Common myeloid progenitor, CD34-positive (primary cell): ENCODE measurements at regions of chr9 and their contacts with region 1.

Region 1: DNA sequence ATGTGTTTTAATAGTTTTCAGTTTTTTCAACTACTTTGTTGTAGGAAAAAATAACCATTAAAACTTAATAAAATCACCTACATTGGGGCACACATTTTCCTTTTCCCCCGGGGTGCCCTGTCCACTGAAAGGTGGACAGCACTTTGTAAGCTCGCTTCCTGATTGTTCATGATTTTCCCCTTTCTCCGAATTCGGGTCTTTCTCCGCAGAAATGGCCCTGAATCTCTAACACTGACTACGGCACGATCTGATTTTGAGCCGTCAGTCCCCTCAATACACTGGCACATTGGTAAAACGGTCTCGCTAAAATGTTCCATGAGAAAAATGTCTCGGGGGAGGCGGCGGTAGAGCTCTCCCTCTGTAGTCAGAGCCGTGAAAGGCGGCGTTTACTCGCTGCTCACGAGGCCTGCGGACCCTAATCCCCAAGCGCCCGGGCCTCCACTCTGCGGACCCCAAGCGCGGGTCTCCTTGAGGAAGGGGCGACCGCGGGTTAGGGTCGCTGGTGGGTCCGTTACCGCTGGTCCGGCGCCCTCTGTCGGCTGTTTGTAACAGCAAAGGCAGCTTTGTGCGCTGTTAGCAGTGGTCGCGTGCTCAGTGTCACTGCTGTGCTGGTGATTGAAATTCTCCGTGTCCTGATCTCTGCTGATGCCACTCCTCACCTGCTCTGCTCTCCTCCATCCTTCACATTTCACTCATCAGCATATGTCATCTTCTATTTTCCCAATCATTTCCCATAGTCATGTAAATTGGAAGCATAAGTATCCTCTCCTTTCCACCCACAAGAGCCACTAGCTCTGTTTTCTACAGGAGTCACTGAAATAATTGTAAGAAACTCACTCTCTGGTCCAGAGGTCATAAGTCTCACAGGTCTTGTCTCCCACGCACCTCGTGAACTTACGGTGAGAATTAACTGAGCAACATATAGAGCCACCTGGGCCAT is 10.8 kb upstream of the IFNA2 start:
- DNase-seq: peak; percentile 43 to 70 (median 65)
- H3K4me3 ChIP-seq: peak overlapping the region; percentile 20 to 76 (median 68)
- H3K27ac ChIP-seq: no peak overlapping the region
- H3K4me1 ChIP-seq: peaks cover 0 to 8% (median 6%) of the 10 kb centered on the region in 4 experiments
- H3K27me3 ChIP-seq: peaks cover 0 to 32% (median 8%) of the 10 kb centered on the region in 5 experiments

Region 2: GRCh38 chr9:21070171-21070571 is 325.9 kb before region 1 on chr9:
- CTCF ChIA-PET with region 1: no interaction called
- POLR2A ChIA-PET with region 1: no interaction called
- DNase-seq: peak; percentile 38 to 84 (median 74)
- H3K4me3 ChIP-seq: peak overlapping the region in 3 of 7 experiments; percentile 16 to 55 (median 55)
- H3K27ac ChIP-seq: peak overlapping the region in 1 of 2 experiments; percentile 18
- H3K4me1 ChIP-seq: peaks cover 2 to 13% (median 7%) of the 10 kb centered on the region in 4 experiments
- H3K27me3 ChIP-seq: no peaks in the 10 kb centered on the region

Region 3: GRCh38 chr9:21326526-21327139 is 69.4 kb before region 1 on chr9:
- CTCF ChIA-PET with region 1: interaction called, 52 read pairs
- POLR2A ChIA-PET with region 1: no interaction called
- DNase-seq: peak; percentile 55 to 76 (median 73)
- H3K4me3 ChIP-seq: no peak overlapping the region
- H3K27ac ChIP-seq: no peak overlapping the region
- H3K4me1 ChIP-seq: peaks cover 0 to 20% (median 13%) of the 10 kb centered on the region in 4 experiments
- H3K27me3 ChIP-seq: no peaks in the 10 kb centered on the region

Region 4: DNA sequence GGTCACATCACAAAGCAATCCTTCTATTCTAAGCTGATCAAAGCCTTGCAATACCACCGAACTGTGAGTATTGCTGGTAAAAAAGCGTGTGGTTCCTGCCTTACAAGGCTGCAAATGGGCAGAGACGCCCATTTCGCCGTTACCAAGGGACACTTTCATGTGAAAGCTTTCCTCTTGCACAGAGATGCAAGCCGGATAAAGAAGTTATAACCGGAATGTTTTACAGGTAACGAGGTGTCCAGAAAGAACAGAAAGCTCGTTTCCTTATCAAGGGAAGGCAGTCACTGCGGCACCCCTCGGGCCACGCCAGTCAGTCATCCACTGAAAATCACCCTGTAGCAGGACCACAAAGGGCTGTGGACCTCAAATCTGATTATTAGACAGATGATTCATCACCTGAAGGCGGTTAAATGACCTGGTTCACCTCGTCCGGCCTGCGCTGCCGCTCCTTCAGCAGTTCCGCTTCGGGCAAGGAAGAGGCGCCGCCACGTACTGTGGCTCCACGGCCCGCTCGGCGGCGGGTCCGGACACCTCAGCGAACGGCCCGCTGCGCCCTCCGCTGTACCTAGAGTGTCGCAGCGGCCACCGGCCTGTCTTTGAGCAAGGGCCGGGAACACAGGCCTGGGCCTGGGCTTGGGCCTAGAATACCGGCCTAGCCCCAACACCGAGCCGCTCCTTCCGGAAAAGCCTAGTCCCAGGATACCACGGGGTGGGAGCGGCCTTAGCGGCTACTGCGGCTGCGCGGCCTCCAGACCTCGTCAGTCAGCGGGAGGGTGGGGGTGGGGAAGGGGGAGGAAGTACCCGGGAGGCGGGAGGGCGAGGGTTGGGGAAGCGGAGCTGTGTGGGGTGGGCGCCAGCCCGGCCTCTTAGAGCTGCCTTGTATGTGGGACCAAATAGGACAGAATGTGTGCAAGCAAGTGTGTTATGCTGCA is 61.1 kb before region 1 on chr9 and contains the start of gene KLHL9:
- CTCF ChIA-PET with region 1: interaction called, 46 read pairs
- POLR2A ChIA-PET with region 1: no interaction called
- DNase-seq: peak; percentile 92 to 95 (median 93)
- H3K4me3 ChIP-seq: peak within 1 kb of the TSS; percentile 72 to 95 (median 89)
- H3K27ac ChIP-seq: peak within 1 kb of the TSS; percentile 97 to 99
- H3K4me1 ChIP-seq: peaks cover 9 to 48% (median 21%) of the 10 kb centered on the region in 4 experiments
- H3K27me3 ChIP-seq: no peaks in the 10 kb centered on the region

Region 5: GRCh38 chr9:21340735-21341134 is 55.3 kb before region 1 on chr9:
- CTCF ChIA-PET with region 1: interaction called, 11 read pairs
- POLR2A ChIA-PET with region 1: no interaction called
- DNase-seq: no peak
- H3K4me3 ChIP-seq: no peak overlapping the region
- H3K27ac ChIP-seq: no peak overlapping the region
- H3K4me1 ChIP-seq: peaks cover 3 to 18% (median 4%) of the 10 kb centered on the region in 4 experiments
- H3K27me3 ChIP-seq: no peaks in the 10 kb centered on the region

Region 6: GRCh38 chr9:21381448-21382339 is 14.4 kb before region 1 on chr9:
- CTCF ChIA-PET with region 1: interaction called, 13 read pairs
- POLR2A ChIA-PET with region 1: no interaction called
- DNase-seq: peak; percentile 60 to 93 (median 90)
- H3K4me3 ChIP-seq: peak overlapping the region in 6 of 7 experiments; percentile 5 to 73 (median 47)
- H3K27ac ChIP-seq: no peak overlapping the region
- H3K4me1 ChIP-seq: peaks cover 15 to 34% (median 23%) of the 10 kb centered on the region in 4 experiments
- H3K27me3 ChIP-seq: no peaks in the 10 kb centered on the region

Region 7: DNA sequence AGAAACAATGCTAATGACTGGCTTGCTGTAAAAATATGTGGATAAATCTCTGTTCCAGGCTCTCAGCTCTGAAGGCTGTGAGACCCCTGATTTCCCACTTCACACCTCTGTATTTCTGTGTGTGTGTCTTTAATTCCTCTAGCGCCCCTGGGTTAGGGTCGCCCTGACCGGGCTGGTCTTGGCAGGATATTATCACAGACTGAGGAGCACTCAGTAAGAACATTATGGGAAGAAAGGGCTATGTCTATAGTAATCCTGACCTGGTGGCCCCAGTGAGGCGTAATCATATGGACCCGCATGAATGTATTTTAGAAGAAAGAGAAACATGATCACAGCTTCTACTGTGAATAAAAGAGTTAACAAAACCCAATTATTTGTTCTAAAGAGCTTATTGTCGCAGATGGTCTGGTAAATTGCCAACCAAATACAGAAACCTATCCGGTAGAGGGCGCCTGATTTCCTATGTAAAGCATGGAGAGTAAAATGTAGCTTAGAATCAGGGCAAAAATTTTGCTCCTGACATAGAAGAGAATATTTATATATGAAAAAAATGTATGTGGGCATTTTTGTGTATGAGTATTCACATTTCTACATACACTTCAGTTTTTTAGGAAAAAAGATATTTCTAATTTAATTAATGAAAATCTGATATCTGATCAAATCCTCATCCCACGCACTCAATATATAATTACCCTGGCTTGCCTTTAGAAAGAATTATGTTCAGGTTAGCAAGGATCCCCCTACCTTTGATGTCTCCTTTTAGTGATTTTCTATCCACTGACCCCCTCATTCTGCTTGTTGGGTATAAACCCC is 38.4 kb after region 1 on chr9:
- CTCF ChIA-PET with region 1: interaction called, 10 read pairs
- POLR2A ChIA-PET with region 1: no interaction called
- DNase-seq: peak; percentile 73 to 87 (median 84)
- H3K4me3 ChIP-seq: no peak overlapping the region
- H3K27ac ChIP-seq: no peak overlapping the region
- H3K4me1 ChIP-seq: peaks cover 0 to 7% (median 4%) of the 10 kb centered on the region in 4 experiments
- H3K27me3 ChIP-seq: no peaks in the 10 kb centered on the region

Region 8: GRCh38 chr9:21465859-21466518 is 69.9 kb after region 1 on chr9:
- CTCF ChIA-PET with region 1: interaction called, 10 read pairs
- POLR2A ChIA-PET with region 1: no interaction called
- DNase-seq: peak; percentile 57 to 76 (median 72)
- H3K4me3 ChIP-seq: no peak overlapping the region
- H3K27ac ChIP-seq: no peak overlapping the region
- H3K4me1 ChIP-seq: no peaks in the 10 kb centered on the region
- H3K27me3 ChIP-seq: no peaks in the 10 kb centered on the region